WTC11 (cell line): ENCODE measurements at regions of chr16 and their contacts with region 1.

Region 1: DNA sequence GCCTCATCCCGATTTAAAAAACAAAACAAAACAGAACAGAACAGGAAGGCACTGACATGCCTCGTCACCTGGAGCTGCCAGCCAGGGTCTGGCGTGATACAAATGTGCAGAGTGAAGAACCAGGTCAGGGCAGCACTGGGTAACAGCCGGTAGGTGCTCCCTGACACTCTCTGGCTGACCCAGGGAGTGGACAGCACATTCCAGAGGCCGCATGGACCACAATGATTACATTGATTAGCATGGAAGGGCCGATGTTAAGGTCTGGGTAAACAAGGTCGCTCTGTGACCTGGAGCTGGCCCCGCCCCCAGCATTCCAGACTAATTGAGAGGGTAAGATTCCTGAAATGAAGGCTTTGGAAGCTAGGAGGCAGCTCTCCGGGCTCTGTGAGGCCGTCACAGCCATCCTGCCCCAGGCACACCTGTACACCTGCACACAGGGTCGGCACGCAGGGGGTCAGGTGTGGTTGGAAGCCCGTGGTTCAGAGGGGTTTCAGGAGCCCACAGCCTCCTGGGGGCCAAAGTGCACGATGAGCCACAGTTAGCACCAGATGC is 21.4 kb downstream of the PIEZO1 start:
- DNase-seq: peak; percentile 91
- ATAC-seq: peak; percentile 79
- H3K4me3 Mint-ChIP-seq: peak overlapping the region; percentile 26; the same call in 1 of the 2 replicates
- H3K27ac Mint-ChIP-seq: peak overlapping the region; percentile 99
- H3K4me1 Mint-ChIP-seq: peaks cover 33% of the 10 kb centered on the region
- H3K27me3 Mint-ChIP-seq: no peaks in the 10 kb centered on the region
- CTCF ChIP-seq: no peak

Region 2: GRCh38 chr16:88554711-88555264 is 208.8 kb before region 1 on chr16:
- CTCF ChIA-PET with region 1: no interaction called
- POLR2A ChIA-PET with region 1: no interaction called
- DNase-seq: no peak
- ATAC-seq: no peak
- H3K4me3 Mint-ChIP-seq: no peak overlapping the region
- H3K27ac Mint-ChIP-seq: no peak overlapping the region
- H3K4me1 Mint-ChIP-seq: peaks cover 6% of the 10 kb centered on the region; the same call in 1 of the 2 replicates
- H3K27me3 Mint-ChIP-seq: peaks cover 14% of the 10 kb centered on the region
- CTCF ChIP-seq: no peak

Region 3: DNA sequence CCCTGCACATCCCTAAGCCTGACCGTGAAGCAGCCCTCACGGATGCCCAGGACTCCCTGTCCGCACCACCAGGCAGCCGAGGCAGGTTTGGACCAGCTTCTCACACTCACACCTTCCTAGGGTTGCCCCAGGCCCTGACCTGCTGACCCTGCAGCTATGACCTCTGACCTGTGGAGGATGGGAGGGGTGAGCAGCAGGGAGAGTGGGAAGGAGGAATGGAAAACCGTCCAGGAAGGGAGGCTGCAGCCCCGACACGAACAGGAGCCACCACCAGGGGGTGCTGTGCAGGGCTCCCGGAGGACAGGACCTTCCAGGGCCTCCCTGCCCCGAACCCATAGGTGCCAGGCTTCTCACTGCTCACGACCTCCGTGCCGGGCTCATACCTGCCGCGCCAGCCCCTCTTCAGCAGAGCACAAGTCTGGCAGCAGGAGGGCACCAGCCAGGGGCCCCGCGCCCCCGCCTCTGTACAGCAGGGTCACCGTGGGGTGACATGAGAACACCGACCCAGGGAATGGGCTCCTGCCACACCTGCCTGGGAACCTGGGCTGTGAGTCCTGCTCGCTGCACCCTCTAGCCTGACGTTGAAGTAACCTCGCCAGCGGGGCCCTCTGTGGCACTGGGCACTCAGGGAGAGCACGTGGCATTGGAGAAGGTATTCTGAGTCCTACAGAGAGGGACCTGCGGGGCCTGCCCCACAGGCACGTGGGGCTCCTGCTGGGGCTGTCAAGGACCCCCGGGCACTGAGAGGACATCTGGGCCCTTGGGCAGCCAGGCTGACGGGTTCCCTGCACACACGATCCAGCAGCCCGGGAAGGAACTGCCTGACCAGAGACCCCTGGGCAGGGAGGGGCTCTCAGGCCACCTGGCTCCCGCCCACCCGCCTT is 19.6 kb before region 1 on chr16:
- CTCF ChIA-PET with region 1: interaction called, 81 read pairs
- POLR2A ChIA-PET with region 1: no interaction called
- DNase-seq: peak; percentile 94
- ATAC-seq: peak; percentile 63
- H3K4me3 Mint-ChIP-seq: no peak overlapping the region
- H3K27ac Mint-ChIP-seq: peak overlapping the region; percentile 70; the same call in 1 of the 2 replicates
- H3K4me1 Mint-ChIP-seq: peaks cover 13% of the 10 kb centered on the region
- H3K27me3 Mint-ChIP-seq: no peaks in the 10 kb centered on the region
- CTCF ChIP-seq: peak; percentile 94

Region 4: GRCh38 chr16:88785106-88785924 is 21.7 kb after region 1 on chr16 and contains the start of gene PIEZO1:
- CTCF ChIA-PET with region 1: interaction called, 35 read pairs
- POLR2A ChIA-PET with region 1: interaction called, 4 read pairs
- DNase-seq: peak; percentile 53
- ATAC-seq: peak; percentile 40
- H3K4me3 Mint-ChIP-seq: peak within 1 kb of the TSS; percentile 73
- H3K27ac Mint-ChIP-seq: no peak within 1 kb of the TSS
- H3K4me1 Mint-ChIP-seq: peaks cover 16% of the 10 kb centered on the region
- H3K27me3 Mint-ChIP-seq: 0 out of 2 replicates have a peak, but pooled peaks cover 3% of the 10 kb centered on the region
- CTCF ChIP-seq: no peak
- total RNA-seq, gene PIEZO1: 68.3 to 75.1 TPM (median 71.3 TPM) in 3 replicates

Region 5: DNA sequence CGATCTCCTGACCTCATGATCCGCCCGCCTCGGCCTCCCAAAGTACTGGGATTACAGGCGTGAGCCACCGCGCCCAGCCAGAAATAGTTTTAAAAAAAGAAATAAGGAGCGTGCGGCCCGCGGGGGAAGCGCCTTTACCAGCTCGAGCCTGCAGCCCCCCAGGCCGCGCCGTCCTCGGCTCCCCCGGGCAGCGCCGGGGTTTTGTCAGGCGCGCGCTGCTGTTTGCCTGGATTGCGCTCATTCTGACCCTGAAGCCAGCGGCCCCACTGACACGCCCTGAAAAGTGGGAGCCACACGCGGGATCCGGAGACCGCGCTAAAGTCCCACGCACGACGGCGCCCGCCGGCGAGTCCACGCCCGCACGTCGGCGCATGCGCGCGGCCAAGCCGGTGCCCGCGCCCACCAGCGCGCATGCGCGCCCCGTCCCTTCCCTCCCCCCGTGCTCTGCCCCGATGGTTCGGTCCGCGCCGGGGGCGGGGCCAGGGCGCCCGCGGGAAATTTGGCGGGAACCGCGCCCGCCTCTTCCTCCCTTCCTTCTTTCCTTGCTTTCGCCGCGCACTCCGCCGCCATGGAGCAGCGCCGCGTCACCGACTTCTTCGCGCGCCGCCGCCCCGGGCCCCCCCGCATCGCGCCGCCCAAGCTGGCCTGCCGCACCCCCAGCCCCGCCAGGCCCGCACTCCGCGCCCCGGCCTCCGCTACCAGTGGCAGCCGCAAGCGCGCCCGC is 39.8 kb after region 1 on chr16 and contains the start of gene CDT1:
- CTCF ChIA-PET with region 1: interaction called, 10 read pairs
- POLR2A ChIA-PET with region 1: interaction called, 4 read pairs
- DNase-seq: peak; percentile 77
- ATAC-seq: peak; percentile 8
- H3K4me3 Mint-ChIP-seq: peak within 1 kb of the TSS; percentile 77
- H3K27ac Mint-ChIP-seq: no peak within 1 kb of the TSS; the same call in 1 of the 2 replicates
- H3K4me1 Mint-ChIP-seq: no peaks in the 10 kb centered on the region
- H3K27me3 Mint-ChIP-seq: no peaks in the 10 kb centered on the region
- CTCF ChIP-seq: no peak
- total RNA-seq, gene CDT1: 142 to 154 TPM (median 149 TPM) in 3 replicates